Gastrocnemius medialis (tissue), 4 donors: ENCODE measurements at regions of chr15 and their contacts with region 1.

Region 1: DNA sequence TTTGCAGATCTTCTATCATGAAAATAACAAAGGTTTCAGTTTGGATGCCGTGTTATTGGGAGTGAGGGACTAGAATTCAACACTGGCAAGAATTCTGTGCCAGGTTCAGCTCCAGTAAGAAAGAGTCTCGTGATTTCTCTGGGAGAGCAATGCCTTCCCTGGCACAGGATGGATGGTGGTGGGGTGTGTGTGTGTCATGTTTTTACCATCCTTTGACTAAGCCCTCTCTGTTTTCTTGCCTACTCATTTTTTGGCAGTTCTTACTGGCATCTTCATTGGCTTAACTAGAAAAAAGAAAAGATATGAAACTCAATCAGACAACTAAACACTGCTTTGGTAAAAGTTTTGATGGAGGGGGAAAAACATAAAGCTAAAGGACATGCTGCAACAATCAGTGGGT is 86.6 kb downstream of the FMN1 start:
- DNase-seq: no peak
- ATAC-seq: no peak
- H3K4me3 ChIP-seq: no peak overlapping the region
- H3K27ac ChIP-seq: no peak overlapping the region
- H3K4me1 ChIP-seq: peaks cover 0 to 5% of the 10 kb centered on the region in 2 donors
- H3K27me3 ChIP-seq: no peaks in the 10 kb centered on the region
- CTCF ChIP-seq: no peak
- POLR2A ChIP-seq: no peak

Region 2: GRCh38 chr15:33045066-33045810 is 62.7 kb before region 1 on chr15:
- in situ Hi-C with region 1: no loop called
- intact Hi-C with region 1: no loop called
- DNase-seq: no peak
- ATAC-seq: no peak
- H3K4me3 ChIP-seq: no peak overlapping the region
- H3K27ac ChIP-seq: no peak overlapping the region
- H3K4me1 ChIP-seq: no peaks in the 10 kb centered on the region
- H3K27me3 ChIP-seq: no peaks in the 10 kb centered on the region
- CTCF ChIP-seq: no peak
- POLR2A ChIP-seq: no peak

Region 3: GRCh38 chr15:33125894-33126537 is 18.1 kb after region 1 on chr15:
- in situ Hi-C with region 1: no loop called
- intact Hi-C with region 1: loop called (anchors 1 kb)
- DNase-seq: no peak
- ATAC-seq: no peak
- H3K4me3 ChIP-seq: no peak overlapping the region
- H3K27ac ChIP-seq: no peak overlapping the region
- H3K4me1 ChIP-seq: peaks cover 15 to 20% of the 10 kb centered on the region in 2 donors
- H3K27me3 ChIP-seq: no peaks in the 10 kb centered on the region
- CTCF ChIP-seq: no peak
- POLR2A ChIP-seq: no peak